ENCODE measurements at regions of chr3 and their contacts with region 1.

Region 1: GRCh38 chr3:116000311-116000710 is 377.0 kb downstream of the GAP43 start:
- DNase-seq: peak; percentile 37
- ATAC-seq: peak; percentile 94
- H3K4me3 ChIP-seq: no peak overlapping the region
- H3K27ac ChIP-seq: no peak overlapping the region
- H3K4me1 ChIP-seq: peaks cover 13% of the 10 kb centered on the region; the same call in 1 of the 2 replicates
- H3K27me3 ChIP-seq: no peaks in the 10 kb centered on the region
- CTCF ChIP-seq: no peak
- EP300 ChIP-seq: peak in 1 of 2 experiments; percentile 30; a peak in 1 of 4 replicates
- POLR2A ChIP-seq: no peak
- RAD21 ChIP-seq: no peak

Region 2: GRCh38 chr3:115986555-115987207 is 13.6 kb before region 1 on chr3:
- CTCF ChIA-PET with region 1: interaction called, 17 read pairs
- POLR2A ChIA-PET with region 1: no interaction called
- RAD21 ChIA-PET with region 1: interaction called, 5 read pairs
- SMC1A ChIA-PET with region 1: interaction called, 41 read pairs
- in situ Hi-C with region 1: no loop called
- intact Hi-C with region 1: no loop called
- DNase-seq: no peak
- ATAC-seq: peak; percentile 54
- H3K4me3 ChIP-seq: no peak overlapping the region
- H3K27ac ChIP-seq: no peak overlapping the region
- H3K4me1 ChIP-seq: no peaks in the 10 kb centered on the region
- H3K27me3 ChIP-seq: no peaks in the 10 kb centered on the region
- CTCF ChIP-seq: peak; percentile 41 to 47 (median 41); a peak in 5 of 6 replicates
- EP300 ChIP-seq: no peak
- POLR2A ChIP-seq: no peak
- RAD21 ChIP-seq: peak; percentile 56

Measured in GM12878 (cell line).